ENCODE measurements at regions of chr20 and their contacts with region 1.

Region 1: DNA sequence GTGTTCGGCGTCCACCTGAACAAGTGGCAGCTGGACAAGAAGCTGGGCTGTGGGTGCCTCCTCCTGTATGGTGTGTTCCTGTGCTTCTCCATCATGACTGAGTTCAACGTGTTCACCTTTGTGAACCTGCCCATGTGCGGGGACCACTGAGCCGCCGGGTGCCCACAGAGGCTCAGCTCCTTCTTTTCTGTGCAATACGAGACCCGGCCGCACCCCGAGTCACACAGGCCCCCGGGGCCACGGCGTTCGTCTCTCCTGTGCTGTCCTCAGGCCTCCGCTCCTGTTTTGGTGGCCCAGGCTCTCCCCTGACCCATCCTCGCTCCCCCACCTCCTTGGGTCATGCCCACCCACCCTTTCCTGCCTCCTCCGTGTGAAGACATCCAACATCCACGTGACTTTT is 37.1 kb upstream of the RIN2 start:
- DNase-seq: no peak
- H3K4me3 ChIP-seq: no peak overlapping the region
- H3K27ac ChIP-seq: no peak overlapping the region
- H3K4me1 ChIP-seq: peaks cover 1% of the 10 kb centered on the region
- H3K27me3 ChIP-seq: no peaks in the 10 kb centered on the region
- CTCF ChIP-seq: no peak

Region 2: GRCh38 chr20:19757487-19758132 is 36.6 kb after region 1 on chr20:
- CTCF ChIA-PET with region 1: no interaction called
- dilution Hi-C with region 1: loop called (anchors 5 kb)
- in situ Hi-C with region 1: no loop called
- intact Hi-C with region 1: no loop called
- DNase-seq: peak; percentile 65
- H3K4me3 ChIP-seq: peak overlapping the region; percentile 64 to 70 (median 67)
- H3K27ac ChIP-seq: peak overlapping the region; percentile 33
- H3K4me1 ChIP-seq: peaks cover 19% of the 10 kb centered on the region
- H3K27me3 ChIP-seq: no peaks in the 10 kb centered on the region
- CTCF ChIP-seq: no peak

Region 3: GRCh38 chr20:20480689-20481088 is 759.7 kb after region 1 on chr20:
- CTCF ChIA-PET with region 1: interaction called, 12 read pairs
- dilution Hi-C with region 1: no loop called
- in situ Hi-C with region 1: no loop called
- intact Hi-C with region 1: no loop called
- DNase-seq: peak; percentile 79
- H3K4me3 ChIP-seq: no peak overlapping the region
- H3K27ac ChIP-seq: peak overlapping the region; percentile 45
- H3K4me1 ChIP-seq: peaks cover 10% of the 10 kb centered on the region
- H3K27me3 ChIP-seq: no peaks in the 10 kb centered on the region
- CTCF ChIP-seq: no peak

Measured in mammary epithelial cell (primary cell).